H1 (cell line): ENCODE measurements at regions of chr15 and their contacts with region 1.

Region 1: GRCh38 chr15:73866881-73867410 is 6.4 kb upstream of the TBC1D21 start:
- DNase-seq: peak in 1 of 2 experiments; percentile 72
- H3K4me3 ChIP-seq: no peak overlapping the region
- H3K27ac ChIP-seq: no peak overlapping the region
- H3K4me1 ChIP-seq: peaks cover 0 to 2% (median 0%) of the 10 kb centered on the region in 4 experiments; a peak in 4 of 7 replicates
- H3K27me3 ChIP-seq: no peaks in the 10 kb centered on the region
- CTCF ChIP-seq: peak; percentile 65 to 92 (median 85)
- EP300 ChIP-seq: no peak
- POLR2A ChIP-seq: no peak
- RAD21 ChIP-seq: peak; percentile 52 to 69

Region 2: DNA sequence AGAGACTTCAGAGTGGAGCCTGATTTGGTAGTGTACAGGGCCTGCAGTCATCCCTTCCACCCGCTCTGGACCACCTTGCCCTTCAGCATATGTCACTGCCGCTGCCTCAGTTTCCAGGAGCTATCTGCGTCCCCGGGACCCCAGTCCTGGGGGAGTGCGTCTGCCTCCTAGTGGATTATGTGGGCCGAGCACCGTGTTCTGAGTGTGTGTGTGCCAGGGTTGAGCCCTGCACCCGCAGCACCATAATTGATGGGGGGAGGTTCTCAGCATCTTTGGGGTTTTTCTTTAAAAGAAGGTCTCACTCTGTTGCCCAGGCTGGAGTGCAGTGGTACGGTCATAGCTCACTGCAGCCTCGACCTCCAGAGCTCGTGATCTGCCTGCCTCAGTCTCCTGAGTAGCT is 149.1 kb before region 1 on chr15:
- CTCF ChIA-PET with region 1: interaction called, 16 read pairs
- POLR2A ChIA-PET with region 1: no interaction called
- DNase-seq: no peak
- H3K4me3 ChIP-seq: no peak overlapping the region
- H3K27ac ChIP-seq: no peak overlapping the region
- H3K4me1 ChIP-seq: peaks cover 0 to 4% (median 0%) of the 10 kb centered on the region in 4 experiments; a peak in 1 of 7 replicates
- H3K27me3 ChIP-seq: no peaks in the 10 kb centered on the region
- CTCF ChIP-seq: peak; percentile 50 to 57 (median 53)
- EP300 ChIP-seq: no peak
- POLR2A ChIP-seq: no peak
- RAD21 ChIP-seq: peak; percentile 28 to 56; a peak in 3 of 4 replicates

Region 3: DNA sequence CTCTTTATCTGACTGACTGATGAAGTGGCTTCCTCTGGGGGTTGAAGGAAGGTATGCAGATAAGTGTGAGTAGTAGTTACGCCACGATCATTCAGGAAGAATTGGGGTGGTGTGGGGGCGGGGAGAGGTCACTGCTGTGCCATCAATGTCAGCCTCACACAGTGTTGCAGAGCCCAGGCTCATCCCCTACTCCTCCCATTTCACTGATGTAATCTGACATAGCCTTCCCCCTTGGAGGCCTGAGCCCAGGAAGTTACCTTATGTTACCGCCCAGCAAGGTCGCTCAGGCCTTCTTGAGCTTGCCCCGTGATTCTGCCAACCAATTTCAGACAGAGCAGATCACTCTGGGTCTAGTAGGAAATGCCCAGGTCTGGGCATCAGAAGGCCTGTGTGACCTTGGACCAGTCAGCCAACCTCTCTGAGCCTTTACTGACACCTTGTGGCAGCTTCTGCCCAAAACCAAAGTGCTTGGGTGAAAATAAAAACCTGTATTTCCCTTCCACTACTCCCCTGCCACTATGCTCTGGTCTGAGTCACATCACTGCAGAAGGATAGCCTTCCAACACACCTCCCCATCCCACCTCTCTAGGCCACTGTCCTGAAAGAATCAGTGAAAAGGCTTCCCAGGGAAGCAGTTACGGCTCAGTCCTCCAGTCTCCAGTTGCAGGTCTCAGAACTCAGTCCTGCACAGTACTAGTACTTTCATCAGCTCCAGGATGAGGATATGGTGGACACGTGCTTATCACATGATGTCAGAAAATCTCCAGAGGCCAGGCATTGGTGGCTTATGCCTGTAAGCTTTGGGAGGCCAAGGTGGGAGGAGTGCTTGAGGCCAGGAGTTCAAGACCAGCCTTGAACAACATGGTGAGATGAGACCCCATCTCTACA is 85.7 kb before region 1 on chr15:
- CTCF ChIA-PET with region 1: interaction called, 10 read pairs
- POLR2A ChIA-PET with region 1: no interaction called
- DNase-seq: peak in 1 of 2 experiments; percentile 66
- H3K4me3 ChIP-seq: no peak overlapping the region
- H3K27ac ChIP-seq: no peak overlapping the region
- H3K4me1 ChIP-seq: peaks cover 7 to 25% (median 14%) of the 10 kb centered on the region in 4 experiments
- H3K27me3 ChIP-seq: no peaks in the 10 kb centered on the region
- CTCF ChIP-seq: peak; percentile 37 to 73 (median 70)
- EP300 ChIP-seq: no peak
- POLR2A ChIP-seq: no peak
- RAD21 ChIP-seq: peak; percentile 77 to 79

Region 4: DNA sequence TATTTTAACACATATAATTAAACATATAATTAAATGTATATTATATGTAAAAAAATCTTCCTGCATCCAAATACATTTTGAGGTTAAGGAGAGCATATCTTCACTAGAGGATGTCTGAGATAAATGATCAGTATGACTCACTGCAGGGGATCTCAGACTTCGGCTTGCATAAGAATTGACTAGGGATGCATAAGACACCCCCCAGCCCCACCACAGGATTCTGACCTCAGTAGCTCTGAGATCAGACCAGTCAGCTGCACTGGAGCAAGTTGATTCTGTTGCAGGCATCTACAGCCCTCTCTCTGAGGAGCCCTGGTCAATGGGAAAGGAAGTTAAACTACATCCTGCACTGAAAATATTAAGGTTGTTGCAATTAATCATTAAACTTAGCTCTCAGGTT is 22.6 kb before region 1 on chr15:
- CTCF ChIA-PET with region 1: interaction called, 32 read pairs
- POLR2A ChIA-PET with region 1: no interaction called
- DNase-seq: no peak
- H3K4me3 ChIP-seq: no peak overlapping the region
- H3K27ac ChIP-seq: no peak overlapping the region
- H3K4me1 ChIP-seq: peaks cover 0 to 11% (median 5%) of the 10 kb centered on the region in 4 experiments; a peak in 5 of 7 replicates
- H3K27me3 ChIP-seq: peaks cover 0 to 2% (median under 1%) of the 10 kb centered on the region in 4 experiments; a peak in 1 of 7 replicates
- CTCF ChIP-seq: no peak
- EP300 ChIP-seq: no peak
- POLR2A ChIP-seq: no peak
- RAD21 ChIP-seq: no peak

Region 5: GRCh38 chr15:73879420-73879819 is 12.5 kb after region 1 on chr15:
- CTCF ChIA-PET with region 1: interaction called, 22 read pairs
- POLR2A ChIA-PET with region 1: no interaction called
- DNase-seq: no peak
- H3K4me3 ChIP-seq: no peak overlapping the region
- H3K27ac ChIP-seq: no peak overlapping the region
- H3K4me1 ChIP-seq: no peaks in the 10 kb centered on the region; a peak in 1 of 7 replicates
- H3K27me3 ChIP-seq: no peaks in the 10 kb centered on the region
- CTCF ChIP-seq: no peak
- EP300 ChIP-seq: no peak
- POLR2A ChIP-seq: no peak
- RAD21 ChIP-seq: no peak